Activated B cell treated with CpG ODN at 0.5 μM for 24 hours (primary cell): ENCODE measurements at regions of chr20 and their contacts with region 1.

Region 1: DNA sequence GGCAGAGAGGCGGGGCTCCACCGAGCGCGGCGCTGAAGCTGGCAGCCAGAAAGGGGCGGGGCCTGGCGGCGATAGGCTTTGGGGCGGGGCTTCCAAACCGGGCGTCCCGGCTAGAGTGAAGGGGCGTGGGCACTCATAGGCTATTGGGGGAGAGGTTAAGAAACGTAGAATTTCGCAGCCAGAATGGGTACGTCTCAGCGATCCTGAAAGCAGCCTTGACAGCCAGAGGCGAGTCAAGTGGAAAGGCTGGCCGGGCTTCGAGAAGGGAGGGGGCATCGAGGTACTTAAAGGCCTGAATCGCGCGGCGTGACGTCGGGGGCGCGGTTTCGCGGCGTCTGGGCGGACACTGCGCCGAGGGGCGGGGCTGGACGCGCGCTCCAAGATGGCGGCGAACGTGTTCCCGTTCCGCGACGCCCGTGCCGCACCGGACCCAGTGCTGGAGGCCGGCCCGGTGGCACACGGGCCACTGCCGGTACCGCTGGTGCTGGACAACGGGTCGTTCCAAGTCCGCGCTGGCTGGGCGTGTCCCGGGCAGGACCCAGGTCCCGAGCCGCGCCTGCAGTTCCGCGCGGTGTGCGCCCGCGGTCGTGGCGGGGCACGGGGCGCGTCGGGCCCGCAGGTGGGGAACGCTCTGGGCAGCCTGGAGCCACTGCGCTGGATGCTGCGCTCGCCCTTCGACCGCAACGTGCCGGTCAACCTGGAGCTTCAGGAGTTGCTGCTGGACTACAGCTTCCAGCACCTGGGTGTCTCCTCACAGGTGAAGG is at the start of gene ACTR5:
- DNase-seq: peak; percentile 96
- ATAC-seq: peak; percentile 92
- H3K4me3 Mint-ChIP-seq: peak within 1 kb of the TSS; percentile 97
- H3K27ac Mint-ChIP-seq: peak within 1 kb of the TSS; percentile 99
- H3K4me1 Mint-ChIP-seq: peaks cover 27% of the 10 kb centered on the region
- H3K27me3 Mint-ChIP-seq: peaks cover 7% of the 10 kb centered on the region
- CTCF ChIP-seq: no peak
- total RNA-seq, gene ACTR5: 12.8 and 13.7 TPM in 2 replicates

Region 2: DNA sequence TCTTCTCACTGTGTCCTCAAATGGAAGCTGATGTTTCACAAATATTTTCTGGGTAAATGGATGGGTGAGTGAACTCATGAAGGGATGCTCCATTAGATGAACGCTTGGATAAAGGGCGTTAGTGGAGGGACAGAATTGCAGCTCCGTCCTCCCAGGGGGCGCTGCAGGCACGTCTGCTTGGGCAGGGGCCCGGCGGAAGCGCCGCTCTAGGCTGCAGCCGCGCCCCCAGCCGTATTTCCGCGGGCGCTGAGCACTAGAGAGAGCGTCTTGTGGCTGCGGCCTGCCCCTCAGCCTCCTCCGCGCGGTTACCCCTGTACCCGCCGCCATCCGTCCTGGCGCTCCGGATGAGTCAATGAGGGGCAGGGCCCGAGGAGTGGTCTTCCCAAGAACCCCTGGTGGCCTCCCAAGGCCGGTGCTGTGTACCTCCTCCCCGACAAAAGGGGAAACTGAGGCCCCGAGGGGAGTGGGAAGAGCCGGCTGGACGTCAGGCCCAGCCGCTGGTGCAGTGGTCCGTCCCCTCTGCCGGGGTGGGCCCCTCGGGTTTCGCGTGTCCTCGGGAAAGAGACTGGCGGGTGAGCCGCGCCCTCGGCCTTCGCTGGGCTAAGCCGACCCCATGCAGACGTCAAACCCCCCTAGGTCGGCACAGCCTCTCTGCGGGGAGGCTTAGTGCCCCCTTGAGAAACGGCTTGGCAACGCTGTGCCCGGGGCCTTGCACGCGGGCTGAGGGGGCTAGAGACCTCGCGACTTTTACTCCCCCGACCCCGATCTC is 301.7 kb before region 1 on chr20:
- CTCF ChIA-PET with region 1: no interaction called
- POLR2A ChIA-PET with region 1: no interaction called
- intact Hi-C with region 1: loop called (anchors 5 kb)
- DNase-seq: peak; percentile 93
- ATAC-seq: peak; percentile 88
- H3K4me3 Mint-ChIP-seq: peak overlapping the region; percentile 87
- H3K27ac Mint-ChIP-seq: peak overlapping the region; percentile 74
- H3K4me1 Mint-ChIP-seq: peaks cover 29% of the 10 kb centered on the region
- H3K27me3 Mint-ChIP-seq: peaks cover 7% of the 10 kb centered on the region
- CTCF ChIP-seq: peak; percentile 66

Region 3: GRCh38 chr20:38645980-38646858 is 102.1 kb before region 1 on chr20:
- CTCF ChIA-PET with region 1: interaction called, 8 read pairs
- POLR2A ChIA-PET with region 1: interaction called, 4 read pairs
- intact Hi-C with region 1: loop called (anchors 1 kb)
- DNase-seq: peak; percentile 93
- ATAC-seq: peak; percentile 98
- H3K4me3 Mint-ChIP-seq: peak overlapping the region; percentile 81
- H3K27ac Mint-ChIP-seq: no peak overlapping the region
- H3K4me1 Mint-ChIP-seq: peaks cover 22% of the 10 kb centered on the region
- H3K27me3 Mint-ChIP-seq: peaks cover 30% of the 10 kb centered on the region
- CTCF ChIP-seq: peak; percentile 45

Region 4: DNA sequence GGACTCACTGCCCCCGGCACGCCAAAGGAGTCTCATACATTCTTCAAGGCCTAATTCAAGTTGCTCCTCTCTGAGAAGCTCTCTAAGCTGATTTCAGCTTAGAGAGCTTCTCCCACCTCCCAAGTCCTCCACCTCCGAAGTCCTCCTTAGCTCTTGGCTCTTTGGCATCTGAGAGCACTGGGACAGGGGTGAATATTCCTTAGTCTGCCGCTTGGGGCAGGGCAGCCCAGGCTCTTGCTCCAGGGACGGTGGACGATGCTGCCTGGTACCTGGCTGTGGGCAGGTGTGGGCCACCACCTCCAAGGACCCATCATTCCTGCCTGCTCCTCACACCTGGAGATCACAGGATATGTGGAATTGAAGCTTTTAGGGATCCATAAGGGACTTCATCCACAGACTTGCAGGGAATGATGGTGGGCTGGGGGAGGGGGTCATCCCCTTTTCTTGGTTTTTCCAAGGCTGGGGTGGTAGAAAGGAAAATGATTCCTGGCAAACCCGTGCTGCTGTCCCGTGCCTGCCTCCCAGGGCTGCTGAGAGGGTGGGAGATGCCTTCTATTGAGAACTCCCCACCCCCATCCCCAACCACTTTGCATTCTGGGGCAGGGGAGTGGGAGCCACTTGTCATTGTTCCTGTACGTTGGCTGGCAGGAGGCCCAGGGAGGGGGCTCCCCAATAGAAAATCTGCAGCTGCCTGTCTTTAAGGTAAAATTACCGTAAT is 89.2 kb before region 1 on chr20:
- CTCF ChIA-PET with region 1: no interaction called
- POLR2A ChIA-PET with region 1: no interaction called
- intact Hi-C with region 1: no loop called
- DNase-seq: no peak
- ATAC-seq: peak; percentile 77
- H3K4me3 Mint-ChIP-seq: no peak overlapping the region
- H3K27ac Mint-ChIP-seq: no peak overlapping the region
- H3K4me1 Mint-ChIP-seq: no peaks in the 10 kb centered on the region
- H3K27me3 Mint-ChIP-seq: peaks cover 45% of the 10 kb centered on the region
- CTCF ChIP-seq: no peak

Region 5: GRCh38 chr20:38805502-38805957 is 57.3 kb after region 1 on chr20 and contains the start of gene PPP1R16B:
- CTCF ChIA-PET with region 1: interaction called, 8 read pairs
- POLR2A ChIA-PET with region 1: interaction called, 10 read pairs
- intact Hi-C with region 1: loop called (anchors 1 kb)
- DNase-seq: peak; percentile 80
- ATAC-seq: peak; percentile 77
- H3K4me3 Mint-ChIP-seq: peak within 1 kb of the TSS; percentile 93
- H3K27ac Mint-ChIP-seq: peak within 1 kb of the TSS; percentile 91
- H3K4me1 Mint-ChIP-seq: peaks cover 51% of the 10 kb centered on the region
- H3K27me3 Mint-ChIP-seq: no peaks in the 10 kb centered on the region
- CTCF ChIP-seq: no peak
- total RNA-seq, gene PPP1R16B: 98.3 and 99.3 TPM in 2 replicates

Region 6: DNA sequence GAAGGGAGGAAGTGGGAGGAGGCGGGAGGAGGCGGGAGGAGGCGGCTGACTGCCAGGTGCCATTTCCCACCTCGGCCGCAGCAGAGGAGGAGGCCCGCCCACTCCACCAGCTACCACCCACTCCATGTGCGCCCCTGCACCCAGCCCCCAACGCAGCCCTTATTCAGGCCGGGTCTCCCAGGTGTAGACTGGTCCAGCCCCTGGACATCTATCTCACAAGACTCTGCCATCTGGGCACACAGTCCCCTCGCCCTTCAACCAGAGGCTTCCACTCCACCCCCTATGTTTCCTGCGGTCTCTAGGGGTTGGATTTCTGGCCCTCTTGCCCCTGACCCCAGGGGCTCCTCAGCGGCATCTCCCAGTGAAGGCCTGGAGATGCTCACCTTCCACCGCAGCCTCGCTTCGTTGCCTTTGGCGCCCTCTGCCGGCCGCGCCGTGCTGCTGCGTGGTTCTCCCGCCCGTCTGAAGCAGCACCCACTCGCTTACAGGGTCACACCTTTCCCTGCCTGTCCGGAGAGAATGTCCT is 145.3 kb after region 1 on chr20:
- CTCF ChIA-PET with region 1: interaction called, 21 read pairs
- POLR2A ChIA-PET with region 1: interaction called, 10 read pairs
- intact Hi-C with region 1: loop called (anchors 1 kb)
- DNase-seq: peak; percentile 76
- ATAC-seq: peak; percentile 77
- H3K4me3 Mint-ChIP-seq: peak overlapping the region; percentile 45
- H3K27ac Mint-ChIP-seq: peak overlapping the region; percentile 86
- H3K4me1 Mint-ChIP-seq: peaks cover 64% of the 10 kb centered on the region
- H3K27me3 Mint-ChIP-seq: no peaks in the 10 kb centered on the region
- CTCF ChIP-seq: peak; percentile 78

Region 7: GRCh38 chr20:38962044-38962927 is 214.0 kb after region 1 on chr20 and contains the start of gene DHX35:
- CTCF ChIA-PET with region 1: interaction called, 6 read pairs
- POLR2A ChIA-PET with region 1: interaction called, 9 read pairs
- intact Hi-C with region 1: loop called (anchors 1 kb)
- DNase-seq: peak; percentile 99
- ATAC-seq: peak; percentile 96
- H3K4me3 Mint-ChIP-seq: peak within 1 kb of the TSS; percentile 95
- H3K27ac Mint-ChIP-seq: peak within 1 kb of the TSS; percentile 98
- H3K4me1 Mint-ChIP-seq: peaks cover 19% of the 10 kb centered on the region
- H3K27me3 Mint-ChIP-seq: no peaks in the 10 kb centered on the region
- CTCF ChIP-seq: no peak
- total RNA-seq, gene DHX35: 9.5 TPM in 2 replicates